Left cardiac atrium (tissue), 4 donors: ENCODE measurements at regions of chr18 and their contacts with region 1.

Region 1: GRCh38 chr18:35415511-35416073 is 38.5 kb upstream of the ZNF396 start:
- DNase-seq: no peak
- ATAC-seq: peak in 1 of 2 donors; percentile 32

Region 2: GRCh38 chr18:35497370-35498197 is 82.0 kb after region 1 on chr18 and contains the start of gene INO80C:
- intact Hi-C with region 1: loop called in 1 of 2 experiments (anchors 10 kb)
- DNase-seq: peak; percentile 94
- ATAC-seq: peak; percentile 99
- total RNA-seq, gene INO80C: 22.9 to 23.5 TPM

Region 3: DNA sequence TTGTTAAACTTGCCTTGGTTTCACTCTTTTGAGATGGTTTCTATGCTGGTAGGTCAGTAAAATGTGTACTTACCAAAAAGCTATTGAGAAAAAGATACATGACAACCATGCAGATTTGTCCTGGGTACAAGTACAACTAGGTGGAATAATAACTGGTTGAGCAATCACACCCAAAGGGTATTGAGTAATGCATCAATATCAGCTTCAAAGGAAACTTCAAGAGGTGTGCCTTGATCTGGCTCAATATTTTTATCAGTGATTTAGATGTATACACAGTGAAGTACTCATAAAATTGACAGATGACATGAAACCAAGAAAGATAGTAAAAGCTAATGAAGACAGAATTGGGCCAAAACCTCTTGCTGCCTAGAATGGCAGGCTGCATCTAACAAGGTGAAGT is 144.3 kb after region 1 on chr18:
- intact Hi-C with region 1: no loop called
- DNase-seq: no peak
- ATAC-seq: no peak